Activated CD8-positive, alpha-beta memory T cell treated with anti-CD3 and anti-CD28 coated beads, Interleukin-2, amount 10 ng/mL, durations not matched to agents 7 days and 5 days (primary cell): ENCODE measurements at regions of chr5 and their contacts with region 1.

Region 1: GRCh38 chr5:172932313-172933017 is 26.8 kb upstream of the RPL26L1 start:
- DNase-seq: peak; percentile 77
- ATAC-seq: peak; percentile 90
- H3K4me3 Mint-ChIP-seq: no peak overlapping the region
- H3K27ac Mint-ChIP-seq: no peak overlapping the region
- H3K4me1 Mint-ChIP-seq: peaks cover 2% of the 10 kb centered on the region
- H3K27me3 Mint-ChIP-seq: no peaks in the 10 kb centered on the region

Region 2: DNA sequence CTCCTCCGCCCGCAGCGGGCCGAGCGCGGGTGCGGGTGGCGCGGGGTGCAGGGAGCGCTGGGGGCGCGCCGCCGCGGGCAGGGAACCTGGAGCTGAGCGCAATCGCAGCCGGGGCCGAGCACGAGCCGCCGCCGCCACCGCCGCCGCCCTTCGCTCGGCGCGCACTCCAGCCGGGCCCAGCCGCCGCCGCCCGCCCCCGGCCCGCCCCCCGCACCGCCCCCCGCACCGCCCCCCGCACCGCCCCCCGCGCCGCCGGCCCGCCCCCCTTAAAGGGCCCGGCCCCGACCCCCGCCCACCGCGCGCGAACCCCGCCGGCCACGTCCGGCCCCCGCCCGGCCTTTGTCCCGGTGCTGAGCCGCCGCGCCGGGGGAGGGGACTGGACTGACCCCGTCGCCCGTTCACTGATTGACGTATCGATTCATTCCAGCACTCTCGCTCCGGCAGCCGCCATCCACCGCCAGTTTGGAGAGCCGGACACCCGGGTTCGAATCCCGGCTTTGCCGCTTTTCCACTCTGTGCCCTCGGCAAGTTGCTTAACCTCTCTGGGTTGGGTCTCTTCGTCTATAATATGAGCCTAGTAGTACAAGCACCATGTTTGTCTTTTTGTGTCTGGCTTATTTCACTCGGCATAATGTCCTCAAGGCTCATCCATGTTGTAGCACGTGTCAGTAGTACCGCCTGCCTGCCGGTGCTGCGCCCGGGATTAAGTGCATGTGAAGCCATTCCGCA is 477.9 kb before region 1 on chr5 and contains the start of gene SH3PXD2B:
- CTCF ChIA-PET with region 1: no interaction called
- DNase-seq: no peak
- ATAC-seq: peak; percentile 80
- H3K4me3 Mint-ChIP-seq: peak within 1 kb of the TSS; percentile 64
- H3K27ac Mint-ChIP-seq: no peak within 1 kb of the TSS
- H3K4me1 Mint-ChIP-seq: peaks cover 5% of the 10 kb centered on the region
- H3K27me3 Mint-ChIP-seq: peaks cover 67% of the 10 kb centered on the region
- total RNA-seq, gene SH3PXD2B: 0.06 to 0.12 TPM

Region 3: GRCh38 chr5:172714491-172715421 is 217.7 kb before region 1 on chr5:
- CTCF ChIA-PET with region 1: interaction called, 291 read pairs
- DNase-seq: peak; percentile 75
- ATAC-seq: peak; percentile 87
- H3K4me3 Mint-ChIP-seq: no peak overlapping the region
- H3K27ac Mint-ChIP-seq: no peak overlapping the region
- H3K4me1 Mint-ChIP-seq: no peaks in the 10 kb centered on the region
- H3K27me3 Mint-ChIP-seq: peaks cover 4% of the 10 kb centered on the region

Region 4: GRCh38 chr5:172721301-172722130 is 210.9 kb before region 1 on chr5:
- CTCF ChIA-PET with region 1: interaction called, 39 read pairs
- DNase-seq: no peak
- ATAC-seq: peak; percentile 18
- H3K4me3 Mint-ChIP-seq: no peak overlapping the region
- H3K27ac Mint-ChIP-seq: no peak overlapping the region
- H3K4me1 Mint-ChIP-seq: peaks cover 10% of the 10 kb centered on the region
- H3K27me3 Mint-ChIP-seq: peaks cover 8% of the 10 kb centered on the region

Region 5: DNA sequence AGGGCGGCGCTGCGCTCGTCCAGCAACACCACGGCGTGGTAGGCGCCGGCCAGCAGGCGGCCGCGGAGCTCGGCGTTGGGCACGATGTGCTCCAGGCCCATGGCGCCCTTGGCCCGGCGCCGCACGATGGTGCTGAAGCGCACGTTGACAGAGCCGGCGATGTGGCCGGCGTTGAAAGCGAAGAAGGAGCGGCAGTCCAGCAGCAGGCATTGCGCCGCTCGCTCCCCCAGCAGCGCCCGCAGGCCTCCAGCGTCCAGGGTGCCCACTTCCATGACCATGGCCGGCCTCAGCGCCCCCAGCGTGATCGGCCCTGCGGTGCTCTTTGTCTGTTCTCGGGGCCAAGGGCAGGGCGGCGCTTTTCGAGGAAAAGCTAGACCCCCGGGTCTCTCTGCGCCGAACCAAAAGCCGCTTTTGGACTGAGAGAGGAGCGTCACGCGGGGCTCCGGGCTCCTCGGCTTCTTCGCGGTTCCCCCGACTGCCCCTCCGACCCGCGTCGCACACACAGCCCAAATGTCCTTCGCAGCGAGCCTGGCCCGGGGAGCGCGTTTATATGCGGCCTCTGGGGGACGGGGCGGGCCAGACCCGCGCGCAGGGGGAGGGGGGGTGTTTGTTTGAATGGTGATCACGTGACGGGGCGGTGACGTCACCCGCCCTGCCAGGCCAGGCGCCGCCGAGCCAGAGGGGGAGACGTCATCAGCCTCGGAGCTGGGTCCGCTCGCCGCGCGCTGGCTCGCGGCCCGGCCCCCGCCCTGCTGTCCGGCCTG is 161.6 kb before region 1 on chr5 and contains the start of gene DUSP1:
- CTCF ChIA-PET with region 1: interaction called, 20 read pairs
- DNase-seq: peak; percentile 98
- ATAC-seq: peak; percentile 63
- H3K4me3 Mint-ChIP-seq: peak within 1 kb of the TSS; percentile 82
- H3K27ac Mint-ChIP-seq: peak within 1 kb of the TSS; percentile 99
- H3K4me1 Mint-ChIP-seq: peaks cover 35% of the 10 kb centered on the region
- H3K27me3 Mint-ChIP-seq: no peaks in the 10 kb centered on the region
- total RNA-seq, gene DUSP1: 6.5 to 32.5 TPM

Region 6: GRCh38 chr5:172891726-172892421 is 40.6 kb before region 1 on chr5:
- CTCF ChIA-PET with region 1: no interaction called
- DNase-seq: no peak
- ATAC-seq: no peak
- H3K4me3 Mint-ChIP-seq: no peak overlapping the region
- H3K27ac Mint-ChIP-seq: no peak overlapping the region
- H3K4me1 Mint-ChIP-seq: peaks cover under 1% of the 10 kb centered on the region
- H3K27me3 Mint-ChIP-seq: no peaks in the 10 kb centered on the region

Region 7: DNA sequence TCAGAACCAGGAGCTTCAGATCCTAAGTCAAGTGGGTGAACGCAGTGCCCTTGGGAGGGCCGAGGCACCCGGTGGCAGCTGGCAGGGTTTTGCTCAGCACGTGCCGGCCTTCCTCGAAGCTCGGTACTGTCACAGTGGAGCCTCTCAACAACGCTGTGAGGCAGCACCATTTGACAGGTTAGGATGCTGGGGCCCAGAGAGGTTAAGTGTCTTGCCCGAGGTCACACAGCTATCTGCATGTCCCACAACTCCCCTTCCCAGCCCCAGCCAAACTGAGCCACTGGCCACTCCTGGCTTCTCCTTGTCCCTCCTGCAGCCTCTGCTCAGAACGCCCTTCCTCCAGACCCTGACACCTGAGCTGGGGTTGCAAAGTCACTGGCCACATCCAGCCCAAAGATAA is 17.0 kb before region 1 on chr5:
- CTCF ChIA-PET with region 1: interaction called, 17 read pairs
- DNase-seq: no peak
- ATAC-seq: no peak
- H3K4me3 Mint-ChIP-seq: no peak overlapping the region
- H3K27ac Mint-ChIP-seq: no peak overlapping the region
- H3K4me1 Mint-ChIP-seq: peaks cover 13% of the 10 kb centered on the region
- H3K27me3 Mint-ChIP-seq: no peaks in the 10 kb centered on the region

Region 8: DNA sequence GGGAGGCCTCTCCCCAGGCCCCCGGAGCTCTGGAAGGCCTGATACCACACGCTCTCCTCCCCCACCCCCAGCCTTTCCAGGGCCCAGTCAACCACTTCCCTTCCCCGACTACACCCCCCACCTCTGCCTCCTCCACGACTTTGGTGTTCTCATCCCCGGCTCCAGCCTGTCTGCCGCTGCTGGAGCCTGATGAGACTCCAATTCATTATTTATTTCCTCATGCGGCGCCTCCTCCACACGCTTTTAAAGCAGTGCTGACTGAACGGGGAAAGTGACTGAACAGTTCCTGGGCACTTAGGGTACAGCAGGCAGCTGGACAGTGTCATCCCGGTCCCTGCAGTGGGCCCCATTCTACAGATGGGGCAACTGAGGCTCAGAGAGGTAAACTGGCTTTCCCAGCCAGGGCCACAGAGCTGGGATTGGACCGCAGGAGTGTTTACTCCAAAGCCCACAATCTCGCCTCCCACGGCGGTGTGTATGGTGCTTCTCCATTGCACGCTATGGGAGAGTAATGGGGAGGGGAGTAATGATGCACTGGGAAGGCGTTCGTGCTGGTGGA is 10.9 kb after region 1 on chr5:
- CTCF ChIA-PET with region 1: interaction called, 10 read pairs
- DNase-seq: no peak
- ATAC-seq: no peak
- H3K4me3 Mint-ChIP-seq: no peak overlapping the region
- H3K27ac Mint-ChIP-seq: no peak overlapping the region
- H3K4me1 Mint-ChIP-seq: no peaks in the 10 kb centered on the region
- H3K27me3 Mint-ChIP-seq: no peaks in the 10 kb centered on the region

Region 9: GRCh38 chr5:173010547-173011464 is 78.3 kb after region 1 on chr5:
- CTCF ChIA-PET with region 1: no interaction called
- DNase-seq: no peak
- ATAC-seq: no peak
- H3K4me3 Mint-ChIP-seq: no peak overlapping the region
- H3K27ac Mint-ChIP-seq: no peak overlapping the region
- H3K4me1 Mint-ChIP-seq: peaks cover 17% of the 10 kb centered on the region
- H3K27me3 Mint-ChIP-seq: no peaks in the 10 kb centered on the region